ENCODE measurements at regions of chr5 and their contacts with region 1.

Region 1: DNA sequence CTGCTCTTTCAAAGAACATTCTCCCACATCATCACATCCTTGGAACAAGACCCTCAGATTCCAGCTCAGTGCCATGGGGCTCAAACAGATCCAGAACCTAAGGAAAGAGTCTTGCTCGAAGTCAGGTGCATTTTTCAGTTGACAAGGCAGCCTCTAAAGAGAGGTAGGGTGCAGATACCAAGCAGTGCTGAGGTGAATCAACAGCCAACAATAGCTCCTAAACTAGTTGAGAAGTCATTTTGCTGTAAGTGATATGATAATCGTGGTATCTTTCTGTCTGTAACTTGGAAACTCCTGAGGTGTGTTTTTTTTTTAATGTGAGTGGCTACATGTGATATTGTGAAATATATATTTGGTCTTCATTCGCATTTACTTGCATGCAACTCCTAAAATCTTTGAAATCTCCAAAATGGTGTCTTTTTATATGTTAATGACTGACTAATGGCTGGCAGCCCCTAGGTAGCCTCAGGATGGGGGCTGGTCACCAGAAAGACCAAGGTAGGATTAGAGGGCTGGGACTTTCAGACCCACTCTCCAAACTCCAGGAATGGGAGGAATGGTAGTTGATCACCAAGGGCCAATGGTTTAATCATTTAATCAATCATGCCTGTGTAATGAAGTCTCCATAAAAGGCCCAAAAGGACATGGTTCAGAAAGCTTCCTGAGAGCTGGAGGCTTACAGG is 96.6 kb downstream of the SERINC5 start:
- DNase-seq: no peak
- H3K4me3 ChIP-seq: no peak overlapping the region
- H3K27ac ChIP-seq: no peak overlapping the region
- H3K4me1 ChIP-seq: no peaks in the 10 kb centered on the region
- H3K27me3 ChIP-seq: no peaks in the 10 kb centered on the region
- CTCF ChIP-seq: no peak

Region 2: GRCh38 chr5:79200573-79201183 is 958.6 kb before region 1 on chr5:
- CTCF ChIA-PET with region 1: no interaction called
- POLR2A ChIA-PET with region 1: no interaction called
- intact Hi-C with region 1: no loop called
- DNase-seq: no peak
- H3K4me3 ChIP-seq: no peak overlapping the region
- H3K27ac ChIP-seq: no peak overlapping the region
- H3K4me1 ChIP-seq: peaks cover 16% of the 10 kb centered on the region
- H3K27me3 ChIP-seq: no peaks in the 10 kb centered on the region
- CTCF ChIP-seq: 0 out of 2 replicates have a peak, but pooled peaks have one; percentile 47

Region 3: DNA sequence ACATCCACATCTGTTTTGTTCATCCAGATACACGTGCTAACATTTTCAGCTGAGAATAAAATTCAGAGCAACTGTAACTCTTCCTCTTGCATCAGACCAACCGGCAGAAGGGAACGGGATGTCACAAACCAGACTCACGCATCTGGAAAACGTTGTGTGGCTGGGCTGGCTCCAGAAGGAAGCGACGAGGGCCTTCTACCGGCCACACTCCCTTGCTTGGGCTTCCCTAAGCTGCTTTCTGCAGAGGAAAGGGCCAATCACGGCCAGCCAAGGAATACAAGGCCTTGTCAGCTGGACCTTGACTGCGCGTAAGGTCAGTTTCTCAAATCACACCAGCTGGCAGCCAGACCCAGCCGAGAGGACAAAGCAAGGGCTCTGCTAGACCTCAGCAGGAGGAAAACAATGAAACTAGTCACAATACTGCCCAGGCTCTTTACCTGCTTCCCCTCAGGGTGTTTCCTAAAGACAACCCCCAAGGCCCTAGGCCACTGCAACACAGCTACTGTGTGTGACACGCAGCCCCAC is 18.1 kb before region 1 on chr5:
- CTCF ChIA-PET with region 1: no interaction called
- POLR2A ChIA-PET with region 1: no interaction called
- intact Hi-C with region 1: no loop called
- DNase-seq: no peak
- H3K4me3 ChIP-seq: no peak overlapping the region
- H3K27ac ChIP-seq: 0 out of 2 replicates have a peak overlapping the region, but pooled peaks have one; percentile 26
- H3K4me1 ChIP-seq: no peaks in the 10 kb centered on the region
- H3K27me3 ChIP-seq: no peaks in the 10 kb centered on the region
- CTCF ChIP-seq: no peak

Region 4: DNA sequence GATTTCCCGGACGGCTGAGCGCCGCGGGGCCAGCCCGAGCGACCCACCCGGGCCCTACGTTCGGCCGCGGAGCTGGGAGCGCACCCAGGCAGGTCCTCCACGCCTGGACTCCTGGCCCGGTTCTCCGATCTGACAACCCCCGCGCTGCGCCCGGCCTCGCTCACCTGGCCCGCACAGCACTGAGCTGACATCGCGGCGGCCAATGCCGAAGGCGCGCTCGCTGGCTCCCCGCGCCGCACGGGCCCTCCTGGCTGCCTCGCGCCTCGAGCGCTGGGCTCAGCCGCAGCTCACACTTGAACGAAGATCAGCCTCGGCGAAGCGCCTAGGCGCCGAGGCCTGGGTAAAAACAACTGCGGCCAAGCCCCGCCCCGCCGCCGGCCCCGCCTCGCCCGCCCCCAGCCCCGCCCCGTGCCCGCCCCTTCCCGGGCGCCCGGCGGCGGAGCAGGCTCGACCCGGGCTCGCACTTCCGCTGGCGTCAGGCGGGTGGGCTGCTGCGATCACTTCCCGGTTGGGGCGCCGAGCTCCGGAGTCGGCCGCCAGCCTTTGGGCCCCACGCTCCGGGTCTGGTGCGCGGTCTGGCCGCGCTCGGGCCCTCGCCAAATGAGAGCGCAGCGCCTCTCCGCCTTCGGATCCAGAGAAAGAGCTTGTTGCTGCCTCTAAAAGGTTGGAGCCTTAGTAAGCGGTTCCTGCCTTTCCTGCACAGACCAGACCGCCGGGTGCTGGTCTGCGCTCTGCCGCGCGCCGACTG is 96.6 kb after region 1 on chr5 and contains the start of gene SERINC5:
- CTCF ChIA-PET with region 1: no interaction called
- POLR2A ChIA-PET with region 1: interaction called, 10 read pairs
- intact Hi-C with region 1: no loop called
- DNase-seq: peak; percentile 53 to 79
- H3K4me3 ChIP-seq: peak within 1 kb of the TSS; percentile 76
- H3K27ac ChIP-seq: peak within 1 kb of the TSS; percentile 94
- H3K4me1 ChIP-seq: peaks cover 36% of the 10 kb centered on the region
- H3K27me3 ChIP-seq: no peaks in the 10 kb centered on the region
- CTCF ChIP-seq: no peak
- total RNA-seq, gene SERINC5: 68.8 and 77.7 TPM in 2 replicates

Measured in PC-9 (cell line).